Stomach (tissue), 19 donors: ENCODE measurements at regions of chr1 and their contacts with region 1.

Region 1: GRCh38 chr1:182301467-182302198 is 90.0 kb downstream of the GLUL start:
- DNase-seq: peak; percentile 40 to 81
- H3K4me3 ChIP-seq: no peak overlapping the region
- H3K27ac ChIP-seq: peak overlapping the region in 3 of 5 donors; percentile 49 to 57 (median 53)
- H3K4me1 ChIP-seq: peaks cover 0 to 49% (median 37%) of the 10 kb centered on the region in 4 donors
- H3K27me3 ChIP-seq: no peaks in the 10 kb centered on the region
- CTCF ChIP-seq: peak in 1 of 7 experiments; percentile 32
- EP300 ChIP-seq: no peak
- POLR2A ChIP-seq: no peak

Region 2: GRCh38 chr1:182348961-182349747 is 47.5 kb after region 1 on chr1:
- intact Hi-C with region 1: no loop called
- DNase-seq: no peak
- H3K4me3 ChIP-seq: no peak overlapping the region
- H3K27ac ChIP-seq: peak overlapping the region in 4 of 5 donors; percentile 23 to 73 (median 58)
- H3K4me1 ChIP-seq: peaks cover 9 to 19% (median 12%) of the 10 kb centered on the region in 4 donors
- H3K27me3 ChIP-seq: no peaks in the 10 kb centered on the region
- CTCF ChIP-seq: no peak
- EP300 ChIP-seq: peak; percentile 82
- POLR2A ChIP-seq: no peak

Region 3: DNA sequence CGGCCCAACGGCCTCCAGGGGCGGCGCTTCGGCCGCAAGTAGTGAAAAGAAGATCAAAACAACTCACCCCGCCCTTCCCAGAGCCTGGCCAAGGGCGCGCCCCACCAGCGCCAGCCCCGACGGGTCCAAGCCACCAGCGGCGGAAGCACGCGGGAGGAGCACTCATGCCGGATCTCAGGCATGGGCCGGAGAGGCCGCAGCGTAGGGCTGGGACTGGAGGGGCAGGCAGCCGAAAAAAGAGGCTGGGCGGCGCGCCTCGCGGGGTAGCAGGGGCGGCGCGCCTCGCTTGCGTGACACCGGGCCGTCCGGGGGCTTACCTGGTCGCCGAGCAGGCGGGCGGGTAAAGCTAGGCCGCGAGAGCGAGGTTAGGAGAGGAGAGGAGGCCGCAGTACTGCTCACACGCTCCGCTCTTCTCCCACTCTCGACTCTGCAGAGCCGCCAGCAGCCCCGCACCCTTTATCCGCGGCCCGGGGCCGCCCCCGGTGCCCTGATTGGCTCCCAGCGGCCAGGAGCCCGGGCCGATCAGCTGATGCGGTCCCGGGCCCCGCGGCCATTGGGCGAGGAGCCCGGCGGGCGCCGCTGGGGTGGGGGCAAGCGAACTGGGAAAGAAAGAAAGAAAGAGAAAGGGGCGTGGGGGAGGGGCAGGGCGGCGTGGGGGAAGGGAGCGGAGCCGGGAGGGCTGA is 89.9 kb after region 1 on chr1 and contains the start of gene GLUL:
- intact Hi-C with region 1: loop called (anchors 10 kb)
- DNase-seq: peak; percentile 98
- H3K4me3 ChIP-seq: peak within 1 kb of the TSS; percentile 70 to 94 (median 78)
- H3K27ac ChIP-seq: peak within 1 kb of the TSS; percentile 97 to 99 (median 99)
- H3K4me1 ChIP-seq: peaks cover 40 to 67% (median 55%) of the 10 kb centered on the region in 4 donors
- H3K27me3 ChIP-seq: no peaks in the 10 kb centered on the region
- CTCF ChIP-seq: peak in 2 of 7 experiments; percentile 5 to 13
- EP300 ChIP-seq: no peak
- POLR2A ChIP-seq: peak in 2 of 4 donors; percentile 97 to 98
- total RNA-seq, gene GLUL: 102 to 1,958 (median 1,662) TPM